Activated B cell treated with CpG ODN at 0.5 μM for 24 hours (primary cell): ENCODE measurements at regions of chr22 and their contacts with region 1.

Region 1: GRCh38 chr22:35409783-35410662 is 10.1 kb downstream of the MCM5 start:
- DNase-seq: peak; percentile 76
- ATAC-seq: peak; percentile 88
- H3K4me3 Mint-ChIP-seq: peak overlapping the region; percentile 82
- H3K27ac Mint-ChIP-seq: peak overlapping the region; percentile 96
- H3K4me1 Mint-ChIP-seq: peaks cover 42% of the 10 kb centered on the region
- H3K27me3 Mint-ChIP-seq: no peaks in the 10 kb centered on the region
- CTCF ChIP-seq: no peak

Region 2: DNA sequence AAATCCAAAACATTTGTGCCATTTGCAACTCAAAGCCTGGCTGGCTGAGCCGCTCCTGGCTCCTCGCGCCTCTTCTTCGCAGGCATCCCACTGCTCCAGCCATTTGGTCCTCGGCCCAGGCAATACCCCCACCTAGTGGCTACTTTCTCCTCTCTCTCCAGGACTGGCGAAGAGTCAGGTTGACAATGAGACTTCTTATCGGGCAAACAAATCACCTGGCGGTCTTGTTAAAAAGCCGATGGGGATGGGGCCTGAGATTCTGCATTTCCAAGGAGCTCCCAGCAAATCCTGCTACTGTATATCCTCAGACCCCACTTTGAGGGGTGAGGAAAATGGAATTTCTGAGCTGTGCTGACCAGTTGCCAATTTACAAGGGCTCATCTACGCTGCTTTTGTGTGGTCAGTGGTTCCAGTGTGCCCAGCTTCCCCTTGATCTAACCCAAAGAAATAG is 255.1 kb before region 1 on chr22:
- CTCF ChIA-PET with region 1: no interaction called
- POLR2A ChIA-PET with region 1: no interaction called
- intact Hi-C with region 1: no loop called
- DNase-seq: no peak
- ATAC-seq: no peak
- H3K4me3 Mint-ChIP-seq: no peak overlapping the region
- H3K27ac Mint-ChIP-seq: no peak overlapping the region
- H3K4me1 Mint-ChIP-seq: peaks cover 3% of the 10 kb centered on the region
- H3K27me3 Mint-ChIP-seq: peaks cover 35% of the 10 kb centered on the region
- CTCF ChIP-seq: no peak

Region 3: DNA sequence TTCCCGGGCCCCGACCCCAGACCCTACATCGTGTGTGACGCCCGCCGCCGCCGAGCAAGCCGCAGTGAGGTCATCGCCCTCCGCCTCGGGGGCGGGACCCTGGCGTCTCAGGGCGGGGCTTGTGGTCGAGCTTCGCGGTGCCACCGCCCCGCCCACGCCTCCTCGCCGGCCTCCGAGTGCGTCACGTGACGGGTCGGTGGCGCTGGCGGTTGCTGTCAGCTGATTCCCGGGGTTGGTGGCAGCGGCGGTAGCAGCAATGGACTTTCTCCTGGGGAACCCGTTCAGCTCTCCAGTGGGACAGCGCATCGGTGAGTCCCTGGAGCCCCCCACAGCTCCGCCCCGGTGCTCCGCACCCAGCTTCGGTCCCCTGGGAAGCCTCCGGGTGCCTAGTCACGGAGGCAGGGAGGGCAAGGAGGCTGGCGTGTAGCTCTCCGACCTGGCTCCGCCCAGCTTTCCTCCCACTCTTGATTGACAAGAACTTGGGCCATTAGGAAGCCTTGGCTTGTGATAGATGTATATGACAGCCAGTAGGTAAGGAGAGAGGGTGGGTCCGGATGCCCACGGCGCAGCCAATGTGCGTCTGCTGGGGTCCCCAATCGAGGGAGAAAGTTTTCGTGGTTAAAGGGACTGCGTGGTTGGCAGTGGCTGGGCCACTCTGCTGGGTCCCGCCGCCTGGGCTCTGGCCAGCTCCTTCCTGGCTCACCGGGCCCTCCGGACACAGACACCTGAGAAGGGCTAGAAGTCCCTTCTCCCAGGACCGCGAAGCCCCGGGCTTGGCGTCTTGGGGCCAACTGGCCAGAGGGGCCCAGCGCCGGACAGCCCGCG is 110.1 kb before region 1 on chr22 and contains the start of gene TOM1:
- CTCF ChIA-PET with region 1: interaction called, 4 read pairs
- POLR2A ChIA-PET with region 1: interaction called, 15 read pairs
- intact Hi-C with region 1: loop called (anchors 2 kb)
- DNase-seq: peak; percentile 98
- ATAC-seq: peak; percentile 93
- H3K4me3 Mint-ChIP-seq: peak within 1 kb of the TSS; percentile 92
- H3K27ac Mint-ChIP-seq: peak within 1 kb of the TSS; percentile 91
- H3K4me1 Mint-ChIP-seq: peaks cover 20% of the 10 kb centered on the region
- H3K27me3 Mint-ChIP-seq: no peaks in the 10 kb centered on the region
- CTCF ChIP-seq: no peak
- total RNA-seq, gene TOM1: 32.2 and 40.8 TPM in 2 replicates

Region 4: GRCh38 chr22:35376728-35377472 is 33.1 kb before region 1 on chr22:
- CTCF ChIA-PET with region 1: interaction called, 13 read pairs
- POLR2A ChIA-PET with region 1: interaction called, 43 read pairs
- intact Hi-C with region 1: loop called (anchors 1 kb)
- DNase-seq: peak; percentile 44
- ATAC-seq: peak; percentile 78
- H3K4me3 Mint-ChIP-seq: peak overlapping the region; percentile 59
- H3K27ac Mint-ChIP-seq: peak overlapping the region; percentile 86
- H3K4me1 Mint-ChIP-seq: peaks cover 49% of the 10 kb centered on the region
- H3K27me3 Mint-ChIP-seq: no peaks in the 10 kb centered on the region
- CTCF ChIP-seq: no peak

Region 5: DNA sequence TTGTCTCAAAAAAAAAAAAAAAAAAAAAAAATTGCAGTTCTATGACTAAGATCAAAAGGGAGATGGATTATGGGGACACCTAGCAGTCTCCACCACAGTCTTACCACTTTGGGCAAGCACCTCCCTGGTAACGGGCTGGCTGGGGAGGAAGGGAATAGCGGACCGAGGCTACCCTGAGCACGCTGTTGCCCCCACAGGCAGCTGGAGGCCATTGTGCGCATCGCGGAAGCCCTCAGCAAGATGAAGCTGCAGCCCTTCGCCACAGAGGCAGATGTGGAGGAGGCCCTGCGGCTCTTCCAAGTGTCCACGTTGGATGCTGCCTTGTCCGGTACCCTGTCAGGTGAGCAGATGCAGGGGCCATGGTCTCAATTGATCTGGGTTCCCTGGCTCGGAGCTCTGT is 11.1 kb after region 1 on chr22:
- CTCF ChIA-PET with region 1: no interaction called
- POLR2A ChIA-PET with region 1: interaction called, 14 read pairs
- intact Hi-C with region 1: no loop called
- DNase-seq: no peak
- ATAC-seq: no peak
- H3K4me3 Mint-ChIP-seq: no peak overlapping the region
- H3K27ac Mint-ChIP-seq: no peak overlapping the region
- H3K4me1 Mint-ChIP-seq: no peaks in the 10 kb centered on the region
- H3K27me3 Mint-ChIP-seq: no peaks in the 10 kb centered on the region
- CTCF ChIP-seq: no peak

Region 6: GRCh38 chr22:36123673-36124630 is 713.9 kb after region 1 on chr22:
- CTCF ChIA-PET with region 1: no interaction called
- POLR2A ChIA-PET with region 1: no interaction called
- intact Hi-C with region 1: loop called (anchors 5 kb)
- DNase-seq: peak; percentile 85
- ATAC-seq: peak; percentile 100
- H3K4me3 Mint-ChIP-seq: peak overlapping the region; percentile 81
- H3K27ac Mint-ChIP-seq: peak overlapping the region; percentile 68
- H3K4me1 Mint-ChIP-seq: peaks cover 8% of the 10 kb centered on the region
- H3K27me3 Mint-ChIP-seq: peaks cover 8% of the 10 kb centered on the region
- CTCF ChIP-seq: peak; percentile 59

Region 7: GRCh38 chr22:36528795-36529751 is 1119.0 kb after region 1 on chr22 and contains the start of gene EIF3D:
- CTCF ChIA-PET with region 1: no interaction called
- POLR2A ChIA-PET with region 1: interaction called, 3 read pairs
- intact Hi-C with region 1: loop called (anchors 2 kb)
- DNase-seq: peak; percentile 96
- ATAC-seq: peak; percentile 92
- H3K4me3 Mint-ChIP-seq: peak within 1 kb of the TSS; percentile 94
- H3K27ac Mint-ChIP-seq: peak within 1 kb of the TSS; percentile 97
- H3K4me1 Mint-ChIP-seq: peaks cover 25% of the 10 kb centered on the region
- H3K27me3 Mint-ChIP-seq: no peaks in the 10 kb centered on the region
- CTCF ChIP-seq: no peak
- total RNA-seq, gene EIF3D: 285 and 301 TPM in 2 replicates